K562 (cell line): ENCODE measurements at regions of chr6 and their contacts with region 1.

Region 1: GRCh38 chr6:63802606-63803206 is 167.1 kb downstream of the PHF3 start:
- DNase-seq: peak in 3 of 4 experiments; percentile 2 to 12 (median 11)
- ATAC-seq: no peak
- H3K4me3 ChIP-seq: no peak overlapping the region
- H3K27ac ChIP-seq: no peak overlapping the region
- H3K4me1 ChIP-seq: no peaks in the 10 kb centered on the region
- H3K27me3 ChIP-seq: no peaks in the 10 kb centered on the region
- CTCF ChIP-seq: peak in 2 of 3 experiments; percentile 10 to 52; a peak in 3 of 6 replicates
- EP300 ChIP-seq: no peak
- POLR2A ChIP-seq: no peak
- RAD21 ChIP-seq: peak; percentile 46 to 70

Region 2: GRCh38 chr6:63352587-63353285 is 450.0 kb before region 1 on chr6:
- CTCF ChIA-PET with region 1: no interaction called
- POLR2A ChIA-PET with region 1: no interaction called
- in situ Hi-C with region 1: no loop called
- intact Hi-C with region 1: loop called (anchors 10 kb)
- DNase-seq: no peak
- ATAC-seq: no peak
- H3K4me3 ChIP-seq: no peak overlapping the region
- H3K27ac ChIP-seq: no peak overlapping the region
- H3K4me1 ChIP-seq: no peaks in the 10 kb centered on the region
- H3K27me3 ChIP-seq: no peaks in the 10 kb centered on the region
- CTCF ChIP-seq: no peak; a peak in 1 of 6 replicates
- EP300 ChIP-seq: no peak
- POLR2A ChIP-seq: no peak
- RAD21 ChIP-seq: peak; percentile 39 to 44; a peak in 3 of 4 replicates